Ovary (tissue), 10 donors: ENCODE measurements at regions of chr7 and their contacts with region 1.

Region 1: DNA sequence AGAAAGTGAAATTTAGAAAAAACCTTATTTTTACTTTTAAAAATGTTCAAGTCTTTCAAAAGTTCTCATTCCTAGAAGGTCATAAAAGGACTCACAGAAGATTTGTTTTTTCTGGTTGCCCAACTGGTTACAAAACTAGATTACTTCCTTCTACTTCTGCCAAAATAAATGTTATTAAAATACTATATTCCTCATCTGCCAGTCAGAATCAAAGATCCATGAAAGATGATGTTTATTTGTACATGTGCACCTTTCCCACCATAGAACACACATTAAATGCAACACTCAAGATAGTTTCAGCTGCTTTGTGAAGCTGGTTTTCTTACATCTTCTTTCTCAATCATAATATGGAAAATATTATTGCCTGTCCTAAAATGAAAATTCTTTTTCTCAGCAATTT is 465.4 kb downstream of the ETV1 start:
- DNase-seq: no peak
- H3K4me3 ChIP-seq: no peak overlapping the region
- H3K27ac ChIP-seq: no peak overlapping the region
- H3K4me1 ChIP-seq: no peaks in the 10 kb centered on the region
- H3K27me3 ChIP-seq: no peaks in the 10 kb centered on the region
- CTCF ChIP-seq: no peak
- EP300 ChIP-seq: no peak
- POLR2A ChIP-seq: no peak

Region 2: GRCh38 chr7:13489386-13489785 is 34.7 kb before region 1 on chr7:
- intact Hi-C with region 1: no loop called
- DNase-seq: no peak
- H3K4me3 ChIP-seq: no peak overlapping the region
- H3K27ac ChIP-seq: no peak overlapping the region
- H3K4me1 ChIP-seq: no peaks in the 10 kb centered on the region
- H3K27me3 ChIP-seq: no peaks in the 10 kb centered on the region
- CTCF ChIP-seq: no peak
- EP300 ChIP-seq: no peak
- POLR2A ChIP-seq: no peak

Region 3: DNA sequence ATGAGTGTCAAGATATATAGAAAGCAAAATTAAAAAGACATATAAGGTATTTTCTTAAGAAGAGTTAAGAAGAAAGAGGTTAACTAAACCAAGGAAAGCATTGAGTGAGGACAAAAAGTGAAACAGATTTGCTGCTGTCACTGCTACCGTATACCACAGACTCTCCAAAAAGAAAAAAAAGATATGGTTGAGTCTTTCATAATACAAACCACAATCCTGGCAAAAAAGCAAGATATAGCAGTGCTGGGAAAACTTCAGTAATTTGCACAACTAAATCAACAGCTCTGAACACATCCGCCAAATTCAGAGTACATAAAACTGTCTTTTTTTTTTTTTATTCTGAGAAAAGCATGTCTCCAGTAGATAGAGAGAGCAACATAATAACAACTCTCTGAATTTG is 350.7 kb after region 1 on chr7:
- intact Hi-C with region 1: loop called in 1 of 4 experiments (anchors 5 kb)
- DNase-seq: no peak
- H3K4me3 ChIP-seq: no peak overlapping the region
- H3K27ac ChIP-seq: no peak overlapping the region
- H3K4me1 ChIP-seq: no peaks in the 10 kb centered on the region
- H3K27me3 ChIP-seq: no peaks in the 10 kb centered on the region
- CTCF ChIP-seq: no peak
- EP300 ChIP-seq: no peak
- POLR2A ChIP-seq: no peak